ENCODE measurements at regions of chr3 and their contacts with region 1.

Region 1: DNA sequence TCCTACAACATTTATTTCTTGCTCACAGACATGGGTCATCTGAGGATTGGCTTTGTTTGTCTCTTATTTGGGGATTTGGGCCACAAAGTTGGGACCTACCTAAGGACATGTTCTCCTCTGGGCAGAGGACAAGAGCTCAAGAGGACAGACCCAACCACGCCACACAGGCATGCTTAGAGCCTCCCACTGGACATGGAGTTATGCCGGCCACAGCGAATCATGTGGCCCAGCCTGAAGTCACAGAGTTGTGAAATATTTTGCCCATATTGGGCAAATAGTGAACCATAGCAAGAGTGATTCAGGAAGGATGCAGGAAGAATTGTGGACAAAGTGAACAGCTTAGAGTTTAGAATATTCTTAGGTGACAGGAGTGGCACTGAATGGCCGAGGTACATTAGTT is 9.9 kb downstream of the TRAK1 start:
- DNase-seq: no peak
- H3K4me3 Mint-ChIP-seq: no peak overlapping the region
- H3K27ac Mint-ChIP-seq: no peak overlapping the region
- H3K4me1 Mint-ChIP-seq: no peaks in the 10 kb centered on the region
- H3K27me3 Mint-ChIP-seq: no peaks in the 10 kb centered on the region

Region 2: DNA sequence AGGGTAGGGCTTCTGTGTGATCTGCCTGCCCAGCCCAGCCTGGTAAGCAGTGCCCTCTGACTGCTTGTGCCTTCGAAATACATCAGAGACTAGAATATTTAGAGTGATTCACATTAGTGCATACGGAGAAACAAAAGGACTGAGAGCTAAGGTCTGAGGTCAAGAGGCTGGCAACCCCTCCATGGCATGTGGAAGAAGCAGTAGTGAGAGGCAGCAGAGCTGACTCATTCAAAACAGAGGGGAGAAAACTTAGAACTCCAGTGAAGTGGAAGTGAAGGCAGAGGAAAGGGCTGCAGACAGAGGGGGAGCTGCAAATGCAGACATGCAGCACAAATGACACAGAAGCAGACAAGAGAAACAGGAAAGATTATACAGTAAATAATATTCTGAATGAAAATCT is 200.8 kb before region 1 on chr3:
- CTCF ChIA-PET with region 1: interaction called, 27 read pairs
- POLR2A ChIA-PET with region 1: no interaction called
- DNase-seq: no peak
- H3K4me3 Mint-ChIP-seq: no peak overlapping the region
- H3K27ac Mint-ChIP-seq: no peak overlapping the region
- H3K4me1 Mint-ChIP-seq: no peaks in the 10 kb centered on the region
- H3K27me3 Mint-ChIP-seq: no peaks in the 10 kb centered on the region